Transverse colon (tissue), 4 donors: ENCODE measurements at regions of chr19 and their contacts with region 1.

Region 1: GRCh38 chr19:47296036-47296435 is 13.6 kb upstream of the C5AR1 start:
- DNase-seq: peak; percentile 77
- H3K4me3 ChIP-seq: no peak overlapping the region
- H3K27ac ChIP-seq: no peak overlapping the region
- H3K4me1 ChIP-seq: peaks cover 0 to 5% (median 0%) of the 10 kb centered on the region in 4 donors
- H3K27me3 ChIP-seq: no peaks in the 10 kb centered on the region
- CTCF ChIP-seq: peak; percentile 67 to 82 (median 78)
- EP300 ChIP-seq: no peak
- POLR2A ChIP-seq: no peak

Region 2: DNA sequence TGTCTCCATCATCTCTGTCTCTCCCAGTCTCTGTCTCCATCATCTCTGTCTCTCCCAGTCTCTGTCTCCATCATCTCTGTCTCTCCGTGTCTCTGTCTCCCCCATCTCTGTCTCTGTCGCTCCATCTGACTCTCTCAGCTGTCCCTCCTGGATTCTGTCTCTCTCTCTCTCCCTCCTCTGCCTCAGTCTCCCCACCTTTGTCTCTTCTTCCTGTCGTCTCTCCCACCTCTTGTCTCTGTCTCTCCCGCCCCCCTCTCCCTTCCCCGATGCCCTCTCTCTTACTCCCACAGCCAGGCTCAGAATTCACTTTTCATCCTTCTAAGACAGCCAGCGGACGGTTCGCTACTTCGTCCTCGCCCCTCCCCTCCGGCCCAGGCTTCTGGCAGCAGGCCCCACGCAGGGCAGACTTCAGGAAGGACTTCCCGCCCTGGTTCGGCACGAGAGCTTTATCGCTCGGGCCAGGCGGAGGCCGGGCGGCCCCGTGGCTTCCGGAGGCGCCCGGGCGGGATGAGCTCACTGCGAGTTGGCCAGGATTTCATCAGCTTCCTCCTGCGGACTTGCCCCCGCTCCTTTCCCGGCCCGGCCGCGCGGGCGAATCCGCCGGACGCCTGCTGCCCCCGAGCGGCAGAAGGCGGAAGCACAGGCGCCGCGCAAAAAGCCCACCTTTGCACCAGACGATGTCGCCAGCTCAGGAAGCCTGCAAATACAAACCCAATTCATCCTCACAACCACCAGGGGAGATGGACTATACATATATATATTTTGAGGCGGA is 52.1 kb before region 1 on chr19:
- in situ Hi-C with region 1: no loop called
- intact Hi-C with region 1: no loop called
- DNase-seq: peak; percentile 92
- H3K4me3 ChIP-seq: peak overlapping the region; percentile 15 to 30 (median 18)
- H3K27ac ChIP-seq: peak overlapping the region; percentile 58 to 80 (median 74)
- H3K4me1 ChIP-seq: peaks cover 8 to 45% (median 38%) of the 10 kb centered on the region in 4 donors
- H3K27me3 ChIP-seq: peaks cover 20% of the 10 kb centered on the region
- CTCF ChIP-seq: peak; percentile 97 to 99 (median 99)
- EP300 ChIP-seq: no peak
- POLR2A ChIP-seq: peak; percentile 39

Region 3: DNA sequence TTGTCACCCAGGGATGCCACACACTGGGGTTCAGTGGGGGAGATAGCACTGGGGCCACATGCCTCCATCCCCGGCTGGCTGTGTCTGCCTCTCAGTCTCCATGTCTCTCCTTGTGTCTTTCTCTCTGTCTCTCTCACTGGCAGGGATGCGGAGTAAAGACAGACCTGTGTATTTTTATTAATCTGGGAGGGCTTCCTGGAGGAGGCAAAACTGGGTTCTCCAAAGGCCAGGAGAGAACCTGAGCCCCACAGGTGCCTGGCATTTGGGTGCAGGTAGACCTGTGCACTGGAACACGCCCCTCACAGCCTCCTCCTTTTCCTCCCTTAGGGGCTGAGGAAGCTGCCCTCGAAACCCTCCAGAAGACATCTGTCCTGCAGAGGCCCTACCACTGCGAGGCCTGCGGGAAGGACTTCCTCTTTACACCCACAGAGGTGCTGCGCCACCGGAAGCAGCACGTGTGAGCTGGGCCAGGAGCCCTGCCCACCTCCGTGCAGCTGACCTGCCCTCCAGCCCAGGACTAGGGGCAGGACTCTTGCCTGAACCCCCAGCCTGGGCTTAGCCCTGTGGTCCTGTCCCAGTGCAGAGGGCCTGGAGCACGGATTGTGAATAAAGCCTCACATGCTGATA is 85.7 kb after region 1 on chr19:
- in situ Hi-C with region 1: loop called in 2 of 4 experiments (anchors 10 to 25 kb)
- intact Hi-C with region 1: no loop called
- DNase-seq: peak; percentile 25
- H3K4me3 ChIP-seq: no peak overlapping the region
- H3K27ac ChIP-seq: no peak overlapping the region
- H3K4me1 ChIP-seq: no peaks in the 10 kb centered on the region
- H3K27me3 ChIP-seq: peaks cover 4% of the 10 kb centered on the region
- CTCF ChIP-seq: no peak
- EP300 ChIP-seq: no peak
- POLR2A ChIP-seq: no peak

Region 4: GRCh38 chr19:47391510-47392223 is 95.6 kb after region 1 on chr19:
- in situ Hi-C with region 1: loop called in 2 of 4 experiments (anchors 10 to 25 kb)
- intact Hi-C with region 1: no loop called
- DNase-seq: peak; percentile 76
- H3K4me3 ChIP-seq: no peak overlapping the region
- H3K27ac ChIP-seq: no peak overlapping the region
- H3K4me1 ChIP-seq: no peaks in the 10 kb centered on the region
- H3K27me3 ChIP-seq: no peaks in the 10 kb centered on the region
- CTCF ChIP-seq: peak; percentile 77 to 95 (median 83)
- EP300 ChIP-seq: no peak
- POLR2A ChIP-seq: no peak

Region 5: GRCh38 chr19:47414469-47414868 is 118.4 kb after region 1 on chr19:
- in situ Hi-C with region 1: loop called in 1 of 4 experiments (anchors 25 kb)
- intact Hi-C with region 1: no loop called
- DNase-seq: no peak
- H3K4me3 ChIP-seq: no peak overlapping the region
- H3K27ac ChIP-seq: no peak overlapping the region
- H3K4me1 ChIP-seq: peaks cover 0 to 4% (median 1%) of the 10 kb centered on the region in 4 donors
- H3K27me3 ChIP-seq: peaks cover 47% of the 10 kb centered on the region
- CTCF ChIP-seq: no peak
- EP300 ChIP-seq: no peak
- POLR2A ChIP-seq: no peak

Region 6: GRCh38 chr19:47428177-47428894 is 132.3 kb after region 1 on chr19:
- in situ Hi-C with region 1: loop called in 2 of 4 experiments (anchors 10 to 25 kb)
- intact Hi-C with region 1: no loop called
- DNase-seq: peak; percentile 80
- H3K4me3 ChIP-seq: peak overlapping the region in 1 of 4 donors; percentile 6
- H3K27ac ChIP-seq: peak overlapping the region; percentile 2 to 66 (median 55)
- H3K4me1 ChIP-seq: peaks cover 6 to 33% (median 27%) of the 10 kb centered on the region in 4 donors
- H3K27me3 ChIP-seq: peaks cover 82% of the 10 kb centered on the region
- CTCF ChIP-seq: no peak
- EP300 ChIP-seq: no peak
- POLR2A ChIP-seq: no peak

Region 7: GRCh38 chr19:47707135-47707925 is 411.3 kb after region 1 on chr19:
- in situ Hi-C with region 1: loop called in 3 of 4 experiments (anchors 25 kb)
- intact Hi-C with region 1: no loop called
- DNase-seq: peak; percentile 82
- H3K4me3 ChIP-seq: no peak overlapping the region
- H3K27ac ChIP-seq: no peak overlapping the region
- H3K4me1 ChIP-seq: peaks cover 0 to 13% (median 7%) of the 10 kb centered on the region in 4 donors
- H3K27me3 ChIP-seq: peaks cover 17% of the 10 kb centered on the region
- CTCF ChIP-seq: peak; percentile 81 to 88 (median 83)
- EP300 ChIP-seq: no peak
- POLR2A ChIP-seq: no peak